ENCODE measurements at regions of chr11 and their contacts with region 1.

Region 1: DNA sequence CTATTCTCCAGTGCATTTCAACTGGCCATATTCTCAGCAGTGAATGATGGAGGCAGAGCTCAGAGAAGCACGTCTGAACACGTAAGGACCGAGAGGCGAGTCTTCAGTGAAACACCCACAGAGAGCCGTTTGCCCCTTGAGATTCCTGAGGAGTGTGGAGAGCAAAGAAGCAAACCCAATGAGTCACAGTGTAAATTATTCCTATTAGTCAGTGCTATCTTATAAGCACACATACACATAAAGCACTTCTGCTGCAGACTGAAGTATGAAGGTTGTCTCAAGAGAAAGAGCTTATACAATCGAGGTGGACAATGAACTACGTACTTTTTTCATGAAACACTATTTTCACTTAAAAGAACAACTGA is 37.4 kb downstream of the GALNT18 start:
- DNase-seq: no peak

Region 2: GRCh38 chr11:11519184-11519583 is 65.2 kb before region 1 on chr11:
- in situ Hi-C with region 1: no loop called
- DNase-seq: no peak

Region 3: DNA sequence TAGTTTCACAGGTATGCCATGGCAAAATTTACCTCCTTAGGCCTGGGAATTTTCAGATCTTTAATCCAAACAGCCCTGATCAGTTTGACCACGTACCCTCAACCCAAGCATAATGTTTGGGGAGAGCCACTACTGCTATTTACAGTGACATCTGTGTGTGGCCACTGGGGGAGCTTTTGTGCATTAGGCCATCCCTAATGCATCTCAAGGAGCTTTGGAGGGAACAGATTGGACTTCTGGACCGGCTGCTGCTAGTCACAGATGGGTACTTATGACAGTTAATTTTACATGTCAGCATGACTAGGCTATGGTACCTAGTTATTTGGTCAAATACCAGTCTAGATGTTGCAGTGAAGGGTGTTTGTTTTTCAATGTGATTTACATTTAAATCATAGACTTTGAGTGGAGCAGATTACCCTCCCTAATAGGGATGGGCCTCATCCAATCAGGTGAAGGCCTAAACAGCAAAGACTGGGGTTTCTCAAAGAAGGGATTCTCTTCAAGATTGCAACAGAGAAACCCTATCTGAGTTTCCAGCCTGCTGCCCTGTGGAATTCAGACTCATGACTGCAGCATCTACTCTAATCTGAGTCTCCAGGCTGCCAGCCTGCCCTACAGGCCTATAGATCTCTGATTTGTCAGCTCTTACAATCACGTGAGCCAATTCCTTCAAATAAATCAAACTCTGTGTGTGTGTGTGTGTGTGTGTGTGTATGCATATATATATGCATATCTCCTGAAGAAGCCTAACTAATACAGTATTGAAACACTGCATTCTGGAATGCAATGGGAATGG is 75.3 kb after region 1 on chr11:
- in situ Hi-C with region 1: loop called (anchors 5 kb)
- DNase-seq: peak; percentile 92